ENCODE measurements at regions of chr4 and their contacts with region 1.

Region 1: GRCh38 chr4:6716018-6716911 is at the start of gene BLOC1S4:
- DNase-seq: peak; percentile 90
- H3K4me3 ChIP-seq: peak within 1 kb of the TSS; percentile 69 to 84 (median 74)
- H3K27ac ChIP-seq: peak within 1 kb of the TSS; percentile 92 to 94 (median 93)
- H3K4me1 ChIP-seq: peaks cover 4 to 26% (median 12%) of the 10 kb centered on the region in 4 donors
- H3K27me3 ChIP-seq: no peaks in the 10 kb centered on the region
- CTCF ChIP-seq: peak in 2 of 5 experiments; percentile 10 to 41
- EP300 ChIP-seq: no peak
- POLR2A ChIP-seq: peak; percentile 84
- total RNA-seq, gene BLOC1S4: 1.00 to 18.8 (median 12.4) TPM

Region 2: DNA sequence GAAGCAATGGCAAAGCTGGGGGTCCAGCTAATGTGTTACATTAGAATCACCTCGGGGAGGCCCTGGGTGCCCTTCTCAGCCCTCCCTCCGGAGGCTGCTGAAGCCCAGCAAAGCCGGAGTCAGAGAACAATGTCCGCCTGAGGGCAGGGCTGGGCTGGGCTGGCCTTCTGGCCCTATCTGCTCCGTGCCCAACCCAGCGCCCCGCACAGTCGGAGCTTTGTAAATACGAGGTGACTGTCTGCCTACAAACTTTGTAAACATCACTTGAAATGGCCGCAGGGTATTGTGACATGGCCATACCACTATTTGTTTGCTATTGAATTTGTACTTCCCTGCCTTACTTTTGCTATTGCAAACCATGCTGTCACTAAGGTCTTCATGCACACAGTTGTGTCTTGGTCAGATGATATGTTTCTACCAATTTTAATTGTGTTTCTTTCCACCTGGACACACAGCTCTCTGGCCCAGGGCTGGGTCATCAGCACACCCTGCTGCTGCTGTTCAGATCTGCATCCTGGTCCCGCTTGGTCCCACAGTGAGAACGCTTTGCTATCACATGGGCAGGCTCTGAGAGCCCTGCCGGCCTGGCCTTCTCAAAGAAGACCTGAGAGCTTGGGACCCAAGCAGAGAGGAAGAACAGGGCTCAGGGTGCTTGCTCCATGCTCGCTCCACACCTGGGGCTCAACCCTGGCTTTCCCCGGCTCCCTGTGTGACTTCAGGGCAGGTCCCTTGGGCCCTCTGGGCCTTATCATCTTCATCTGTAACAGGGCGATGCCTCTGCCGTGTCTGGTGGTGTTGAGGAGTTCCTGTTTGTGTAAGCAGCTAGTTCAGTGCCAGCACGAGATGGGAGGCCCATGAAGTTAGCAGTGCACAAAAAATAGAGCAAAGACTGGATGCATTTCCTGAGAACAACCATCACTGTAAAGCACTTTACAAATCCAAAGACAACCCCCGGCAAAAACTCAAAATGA is 20.3 kb before region 1 on chr4:
- in situ Hi-C with region 1: no loop called
- intact Hi-C with region 1: no loop called
- DNase-seq: peak; percentile 71
- H3K4me3 ChIP-seq: no peak overlapping the region
- H3K27ac ChIP-seq: peak overlapping the region; percentile 8 to 70 (median 55)
- H3K4me1 ChIP-seq: peaks cover 0 to 26% (median 10%) of the 10 kb centered on the region in 4 donors
- H3K27me3 ChIP-seq: no peaks in the 10 kb centered on the region
- CTCF ChIP-seq: no peak
- EP300 ChIP-seq: no peak
- POLR2A ChIP-seq: no peak

Region 3: GRCh38 chr4:6783053-6783981 is 67.1 kb after region 1 on chr4:
- in situ Hi-C with region 1: no loop called
- intact Hi-C with region 1: loop called (anchors 5 kb)
- DNase-seq: peak; percentile 94
- H3K4me3 ChIP-seq: peak overlapping the region; percentile 81 to 99 (median 96)
- H3K27ac ChIP-seq: peak overlapping the region; percentile 99 to 100 (median 100)
- H3K4me1 ChIP-seq: peaks cover 7 to 55% (median 33%) of the 10 kb centered on the region in 4 donors
- H3K27me3 ChIP-seq: no peaks in the 10 kb centered on the region
- CTCF ChIP-seq: peak in 1 of 5 experiments; percentile 15
- EP300 ChIP-seq: no peak
- POLR2A ChIP-seq: peak; percentile 90

Region 4: GRCh38 chr4:6834867-6835266 is 118.6 kb after region 1 on chr4:
- in situ Hi-C with region 1: no loop called
- intact Hi-C with region 1: no loop called
- DNase-seq: no peak
- H3K4me3 ChIP-seq: no peak overlapping the region
- H3K27ac ChIP-seq: no peak overlapping the region
- H3K4me1 ChIP-seq: peaks cover 0 to 7% (median 2%) of the 10 kb centered on the region in 4 donors
- H3K27me3 ChIP-seq: no peaks in the 10 kb centered on the region
- CTCF ChIP-seq: no peak
- EP300 ChIP-seq: no peak
- POLR2A ChIP-seq: no peak

Region 5: GRCh38 chr4:6885951-6886557 is 169.8 kb after region 1 on chr4:
- in situ Hi-C with region 1: loop called in 2 of 4 experiments (anchors 10 to 25 kb)
- intact Hi-C with region 1: no loop called
- DNase-seq: no peak
- H3K4me3 ChIP-seq: no peak overlapping the region
- H3K27ac ChIP-seq: peak overlapping the region in 3 of 4 donors; percentile 34 to 55 (median 34)
- H3K4me1 ChIP-seq: peaks cover 0 to 10% (median 7%) of the 10 kb centered on the region in 4 donors
- H3K27me3 ChIP-seq: no peaks in the 10 kb centered on the region
- CTCF ChIP-seq: peak in 1 of 5 experiments; percentile 18
- EP300 ChIP-seq: no peak
- POLR2A ChIP-seq: no peak